Panc1 (cell line): ENCODE measurements at regions of chr17 and their contacts with region 1.

Region 1: GRCh38 chr17:4004517-4005295 is 40.5 kb upstream of the ATP2A3 start:
- DNase-seq: no peak
- ATAC-seq: peak; percentile 82
- H3K4me3 ChIP-seq: no peak overlapping the region
- H3K27ac ChIP-seq: no peak overlapping the region
- H3K4me1 ChIP-seq: no peaks in the 10 kb centered on the region
- H3K27me3 ChIP-seq: no peaks in the 10 kb centered on the region
- CTCF ChIP-seq: peak; percentile 96

Region 2: GRCh38 chr17:3935140-3935542 is 69.6 kb before region 1 on chr17:
- CTCF ChIA-PET with region 1: no interaction called
- POLR2A ChIA-PET with region 1: no interaction called
- in situ Hi-C with region 1: no loop called
- intact Hi-C with region 1: loop called (anchors 5 kb)
- DNase-seq: no peak
- ATAC-seq: peak; percentile 100
- H3K4me3 ChIP-seq: no peak overlapping the region
- H3K27ac ChIP-seq: no peak overlapping the region
- H3K4me1 ChIP-seq: no peaks in the 10 kb centered on the region
- H3K27me3 ChIP-seq: no peaks in the 10 kb centered on the region
- CTCF ChIP-seq: peak; percentile 91